A549 (cell line): ENCODE measurements at regions of chr20 and their contacts with region 1.

Region 1: DNA sequence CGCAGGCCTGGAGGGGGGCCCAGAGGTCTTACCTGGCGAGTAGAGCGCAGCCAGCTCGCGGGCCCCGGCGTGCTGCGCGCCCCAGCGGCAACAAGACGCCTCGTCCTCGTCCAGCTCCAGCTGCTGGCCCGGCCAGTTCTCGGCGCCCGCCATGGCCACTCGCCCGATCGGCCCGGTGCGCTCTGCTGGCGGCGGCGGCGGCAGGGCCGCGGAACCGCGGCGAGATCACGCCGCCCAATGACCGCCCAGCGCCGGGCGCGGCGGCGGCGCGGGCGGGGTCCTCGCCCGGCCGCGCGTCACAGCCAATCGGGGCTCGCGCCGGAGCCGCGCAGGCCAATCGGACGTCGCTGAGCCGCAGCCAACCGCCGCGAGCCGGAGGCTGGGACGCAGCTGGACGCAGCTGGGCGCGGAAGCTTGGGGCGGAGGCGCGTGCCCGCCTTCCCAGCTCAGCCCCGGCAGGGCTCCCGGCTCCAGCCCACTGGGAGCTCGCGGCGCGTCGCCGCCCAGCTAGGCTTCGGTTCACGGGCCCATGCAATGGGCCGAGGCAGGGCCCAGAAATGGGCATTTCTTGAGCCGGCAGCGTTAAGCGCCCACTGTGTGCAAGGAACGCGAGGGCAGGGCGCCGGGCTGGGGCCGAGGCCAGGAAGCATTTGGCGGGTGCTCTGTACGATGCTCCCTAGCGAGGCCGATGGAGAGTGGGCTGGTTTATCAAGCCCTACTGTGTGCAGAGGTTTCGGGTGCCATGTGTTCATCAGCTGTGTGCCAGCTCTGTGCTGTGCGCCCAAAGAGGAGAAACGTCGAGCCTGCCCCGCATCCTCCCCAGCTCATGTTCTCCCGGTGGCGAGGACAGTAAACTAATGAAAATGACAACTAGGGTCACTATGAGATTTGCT is at the start of gene PEDS1:
- DNase-seq: peak; percentile 87 to 98
- ATAC-seq: peak; percentile 95 to 97
- H3K4me3 ChIP-seq: peak within 1 kb of the TSS; percentile 100
- H3K27ac ChIP-seq: peak within 1 kb of the TSS; percentile 95 to 99
- H3K4me1 ChIP-seq: peaks cover 39% of the 10 kb centered on the region
- CTCF ChIP-seq: no peak
- EP300 ChIP-seq: no peak
- POLR2A ChIP-seq: peak; percentile 66
- RAD21 ChIP-seq: no peak
- polyA plus RNA-seq, gene PEDS1: 24.5 and 33.5 TPM in 2 replicates

Region 2: DNA sequence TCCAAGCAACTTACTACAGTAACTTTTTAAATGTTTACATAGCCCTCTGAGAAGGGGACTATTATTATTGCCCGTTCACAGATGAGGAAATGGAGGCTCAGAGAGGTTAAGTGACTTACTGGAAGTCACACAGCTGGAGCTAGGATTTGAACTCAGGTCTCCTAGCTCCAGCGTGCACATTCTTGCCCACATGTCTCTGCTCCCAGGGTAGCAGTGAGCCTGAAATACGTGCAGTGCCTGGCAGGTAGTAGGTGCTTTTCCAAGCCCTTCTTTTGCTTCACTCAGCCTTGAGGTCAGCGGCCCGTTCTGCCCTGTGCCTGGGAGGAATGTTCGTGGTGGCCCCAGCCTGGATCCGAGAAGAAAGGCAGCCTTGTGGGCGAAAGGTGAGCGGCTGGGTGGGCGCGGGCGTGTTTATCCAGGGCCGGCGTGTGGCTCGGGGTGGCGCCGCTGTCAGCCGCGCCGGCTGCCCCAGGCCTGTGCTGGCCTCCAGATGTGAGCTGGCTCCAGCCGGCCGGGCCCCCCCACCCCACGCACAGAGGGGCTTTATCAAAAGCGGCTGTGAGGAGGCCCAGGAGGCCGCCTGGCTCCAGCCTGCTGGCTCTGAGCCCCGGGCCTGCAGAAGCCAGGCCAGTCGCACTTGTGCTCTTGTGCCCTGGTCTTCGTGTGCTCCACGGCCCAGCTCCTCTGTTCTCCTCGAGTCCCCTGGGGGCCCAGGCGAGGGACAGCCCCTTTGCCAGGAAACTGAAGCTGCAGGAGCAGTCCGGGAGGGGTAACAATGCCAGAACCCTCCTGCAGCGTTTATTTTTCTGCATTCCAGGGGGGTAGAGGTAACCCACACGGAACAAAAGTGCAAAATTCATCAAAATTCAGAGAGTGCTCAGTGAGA is 98.9 kb before region 1 on chr20:
- CTCF ChIA-PET with region 1: no interaction called
- POLR2A ChIA-PET with region 1: no interaction called
- DNase-seq: no peak
- ATAC-seq: peak in 1 of 2 experiments; percentile 19; a peak in 1 of 6 replicates
- H3K4me3 ChIP-seq: no peak overlapping the region
- H3K27ac ChIP-seq: peak overlapping the region in 1 of 2 experiments; percentile 31; a peak in 1 of 6 replicates
- H3K4me1 ChIP-seq: no peaks in the 10 kb centered on the region
- CTCF ChIP-seq: no peak
- EP300 ChIP-seq: no peak
- POLR2A ChIP-seq: no peak
- RAD21 ChIP-seq: no peak

Region 3: DNA sequence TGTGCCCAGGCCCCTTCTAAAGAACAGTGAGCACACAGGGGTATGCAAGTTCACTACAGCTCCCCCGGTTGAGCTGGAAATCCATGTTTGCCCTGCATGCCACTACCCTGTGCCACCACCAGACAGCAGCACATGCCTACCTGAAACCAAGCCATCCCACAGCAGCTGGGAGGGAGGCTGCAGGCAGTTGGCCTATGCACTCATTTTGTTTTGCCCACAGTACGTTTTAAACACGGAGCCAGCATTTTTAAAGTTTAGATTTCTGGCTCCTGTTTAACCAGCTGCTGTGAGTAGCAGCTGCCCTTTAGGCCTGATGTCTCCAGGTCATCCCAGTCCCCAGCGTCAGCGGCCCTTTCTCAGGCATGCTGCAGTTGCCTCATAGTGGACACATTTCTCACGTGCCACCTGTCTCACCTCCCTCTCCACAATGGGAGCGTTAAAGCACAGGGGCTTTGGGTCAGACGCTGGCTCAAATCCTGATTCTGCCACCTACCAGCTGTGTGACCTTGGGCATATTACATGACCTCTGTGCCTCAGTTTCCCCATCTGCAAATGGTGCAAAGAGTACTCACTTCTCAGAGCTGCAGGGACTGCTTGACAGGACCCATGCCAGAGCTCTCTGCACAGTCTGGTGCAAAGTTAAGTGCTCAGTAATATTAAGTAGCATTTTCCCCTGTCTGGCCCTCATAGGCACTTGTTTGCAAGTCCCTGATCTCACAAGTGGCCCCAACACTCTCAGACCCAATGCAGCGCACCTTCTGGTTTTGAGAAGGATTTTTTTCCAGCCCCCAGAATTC is 32.6 kb before region 1 on chr20:
- CTCF ChIA-PET with region 1: interaction called, 161 read pairs
- POLR2A ChIA-PET with region 1: interaction called, 18 read pairs
- DNase-seq: peak; percentile 79 to 82
- ATAC-seq: peak; percentile 89 to 91
- H3K4me3 ChIP-seq: no peak overlapping the region
- H3K27ac ChIP-seq: peak overlapping the region in 1 of 2 experiments; percentile 45; a peak in 3 of 6 replicates
- H3K4me1 ChIP-seq: peaks cover 11% of the 10 kb centered on the region
- CTCF ChIP-seq: peak; percentile 80
- EP300 ChIP-seq: no peak
- POLR2A ChIP-seq: no peak
- RAD21 ChIP-seq: peak; percentile 96 to 99

Region 4: DNA sequence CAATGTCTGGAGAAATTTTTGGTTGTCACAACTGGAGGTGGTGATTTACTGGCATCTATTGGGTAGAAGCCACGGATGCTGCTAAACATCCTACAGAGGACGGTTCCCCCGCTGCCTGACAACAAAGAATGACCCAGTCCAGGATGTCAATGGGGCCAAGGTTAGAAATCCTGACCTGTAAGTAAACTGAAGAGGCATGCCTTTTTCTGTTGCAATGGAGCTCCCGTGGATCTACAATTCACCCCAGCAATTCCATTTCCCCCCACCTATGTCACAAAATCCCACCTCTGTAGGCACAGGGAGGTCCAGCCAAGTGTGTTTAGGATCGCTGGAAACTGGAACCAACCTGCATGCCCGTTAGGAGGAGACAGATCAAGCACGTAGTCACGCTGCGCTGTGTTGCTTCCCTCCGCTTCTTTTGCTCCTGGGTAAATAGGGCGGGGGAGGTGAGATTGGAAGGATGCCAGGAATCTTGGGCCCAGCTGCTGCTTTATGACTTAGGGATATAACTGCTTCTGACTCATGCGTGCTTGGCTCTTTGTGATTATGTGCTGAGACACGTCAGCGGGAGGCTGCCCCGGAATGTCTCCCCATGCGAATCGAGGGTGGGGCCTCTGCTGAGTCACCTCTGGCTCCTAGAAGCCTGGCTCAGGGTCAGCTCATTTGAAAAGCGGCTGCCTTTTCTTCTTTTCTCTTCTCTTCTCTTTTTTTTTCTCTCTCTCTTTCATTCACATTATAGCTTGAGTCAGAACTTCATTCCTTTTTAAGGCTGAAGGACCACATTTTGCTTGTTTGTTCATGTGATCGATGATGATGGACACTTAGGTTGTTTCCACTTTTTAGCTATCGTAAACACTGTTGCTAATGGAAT is 12.2 kb after region 1 on chr20:
- CTCF ChIA-PET with region 1: interaction called, 74 read pairs
- POLR2A ChIA-PET with region 1: interaction called, 40 read pairs
- DNase-seq: peak; percentile 99 to 100
- ATAC-seq: peak; percentile 94 to 98
- H3K4me3 ChIP-seq: peak overlapping the region; percentile 30
- H3K27ac ChIP-seq: peak overlapping the region; percentile 81 to 92
- H3K4me1 ChIP-seq: peaks cover 40% of the 10 kb centered on the region
- CTCF ChIP-seq: no peak
- EP300 ChIP-seq: peak; percentile 68 to 90; a peak in 3 of 5 replicates
- POLR2A ChIP-seq: no peak
- RAD21 ChIP-seq: peak in 1 of 2 experiments; percentile 45; a peak in 2 of 5 replicates

Region 5: DNA sequence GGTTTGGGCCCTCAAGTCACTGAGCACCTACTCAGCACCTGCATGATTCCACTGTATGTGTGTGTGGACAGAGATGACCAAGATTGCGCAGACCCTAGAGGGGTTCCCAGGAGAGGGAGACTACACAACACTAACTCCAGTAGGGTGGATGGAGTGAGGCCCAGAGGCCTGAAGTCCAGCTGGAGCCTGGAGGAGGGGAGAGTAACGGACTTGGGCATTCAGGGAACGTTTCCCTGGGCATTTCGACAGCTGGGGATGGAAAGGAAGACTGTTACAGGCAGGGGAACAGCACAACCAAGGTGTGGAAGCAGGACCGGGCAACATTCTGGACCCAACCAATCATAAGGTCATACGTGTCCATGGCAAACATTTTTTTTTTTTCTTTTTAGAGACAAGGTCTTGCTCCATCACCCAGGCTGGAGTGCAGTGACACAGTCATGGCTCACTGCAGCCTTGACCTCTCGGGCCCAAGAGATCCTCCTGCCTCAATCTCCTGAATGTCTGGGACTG is 25.8 kb after region 1 on chr20:
- CTCF ChIA-PET with region 1: interaction called, 26 read pairs
- POLR2A ChIA-PET with region 1: no interaction called
- DNase-seq: no peak
- ATAC-seq: peak; percentile 73 to 76
- H3K4me3 ChIP-seq: no peak overlapping the region
- H3K27ac ChIP-seq: peak overlapping the region; percentile 43 to 73; a peak in 5 of 6 replicates
- H3K4me1 ChIP-seq: peaks cover 4% of the 10 kb centered on the region; the same call in 1 of the 3 replicates
- CTCF ChIP-seq: no peak; the same call in 1 of the 3 replicates
- EP300 ChIP-seq: no peak
- POLR2A ChIP-seq: no peak
- RAD21 ChIP-seq: no peak